Activated B cell treated with CpG ODN at 0.5 μM for 24 hours (primary cell): ENCODE measurements at regions of chr19 and their contacts with region 1.

Region 1: DNA sequence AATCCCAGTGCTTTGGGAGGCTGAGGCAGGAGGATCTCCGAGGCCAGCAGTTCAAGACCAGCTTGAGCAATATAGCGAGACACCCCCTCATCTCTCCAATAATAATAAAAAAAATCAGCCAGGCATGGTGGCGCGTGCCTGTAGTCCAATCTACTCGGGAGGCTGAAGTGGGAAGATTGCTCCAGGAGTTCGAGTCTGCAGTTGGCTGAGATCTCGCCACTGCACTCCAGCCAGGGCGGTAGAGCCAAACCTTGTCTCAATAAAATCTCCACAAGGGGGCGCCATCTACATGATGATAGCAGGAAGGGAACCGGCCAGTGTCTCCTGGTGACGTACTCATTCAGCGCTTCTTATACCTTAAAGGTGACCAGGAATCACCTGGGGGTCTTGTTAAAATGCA is 13.6 kb upstream of the C5AR1 start:
- DNase-seq: no peak
- ATAC-seq: peak; percentile 75
- H3K4me3 Mint-ChIP-seq: no peak overlapping the region
- H3K27ac Mint-ChIP-seq: no peak overlapping the region
- H3K4me1 Mint-ChIP-seq: peaks cover 20% of the 10 kb centered on the region
- H3K27me3 Mint-ChIP-seq: no peaks in the 10 kb centered on the region
- CTCF ChIP-seq: no peak

Region 2: DNA sequence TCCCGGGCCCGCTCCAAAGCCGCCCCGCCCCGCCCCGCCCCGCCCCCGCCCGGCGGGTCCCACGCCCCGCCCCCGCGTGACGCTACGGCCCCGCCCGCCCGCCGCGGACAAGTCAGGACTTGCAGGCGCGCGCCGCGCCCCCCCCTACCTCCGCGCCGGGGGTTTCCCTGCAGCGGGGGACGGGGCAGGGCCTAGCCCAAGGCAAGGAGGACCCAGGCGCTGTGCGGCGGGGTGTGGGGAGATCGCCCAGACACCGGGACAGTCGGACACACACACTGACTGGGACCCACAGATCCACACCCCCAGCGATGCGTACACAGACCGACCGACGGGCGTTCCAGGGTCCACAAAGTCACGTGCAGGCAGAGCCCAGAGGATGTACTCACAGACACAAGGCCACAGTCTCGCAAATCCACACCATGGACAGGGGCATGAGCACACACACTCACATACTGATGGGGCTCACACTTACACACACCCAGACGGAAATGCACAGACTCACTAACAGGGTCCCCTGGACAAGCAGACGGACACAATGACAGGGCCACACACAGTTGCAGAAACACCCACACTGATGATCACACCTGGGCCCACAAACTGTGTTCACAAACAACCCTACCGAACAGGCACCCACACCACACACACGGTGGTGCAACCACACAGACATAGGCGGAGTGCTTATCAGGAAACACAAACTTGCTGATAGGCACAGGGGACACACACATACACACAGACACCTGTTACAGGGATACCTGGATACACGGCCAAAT is 64.6 kb before region 1 on chr19:
- CTCF ChIA-PET with region 1: no interaction called
- POLR2A ChIA-PET with region 1: no interaction called
- intact Hi-C with region 1: no loop called
- DNase-seq: peak; percentile 86
- ATAC-seq: peak; percentile 63
- H3K4me3 Mint-ChIP-seq: peak overlapping the region; percentile 67
- H3K27ac Mint-ChIP-seq: peak overlapping the region; percentile 71
- H3K4me1 Mint-ChIP-seq: peaks cover 30% of the 10 kb centered on the region
- H3K27me3 Mint-ChIP-seq: no peaks in the 10 kb centered on the region
- CTCF ChIP-seq: no peak

Region 3: GRCh38 chr19:47336853-47337279 is 40.8 kb after region 1 on chr19:
- CTCF ChIA-PET with region 1: no interaction called
- POLR2A ChIA-PET with region 1: no interaction called
- intact Hi-C with region 1: no loop called
- DNase-seq: no peak
- ATAC-seq: peak; percentile 54
- H3K4me3 Mint-ChIP-seq: no peak overlapping the region
- H3K27ac Mint-ChIP-seq: no peak overlapping the region
- H3K4me1 Mint-ChIP-seq: peaks cover 7% of the 10 kb centered on the region
- H3K27me3 Mint-ChIP-seq: peaks cover 5% of the 10 kb centered on the region
- CTCF ChIP-seq: no peak

Region 4: GRCh38 chr19:47357788-47358680 is 62.0 kb after region 1 on chr19:
- CTCF ChIA-PET with region 1: no interaction called
- POLR2A ChIA-PET with region 1: no interaction called
- intact Hi-C with region 1: no loop called
- DNase-seq: no peak
- ATAC-seq: no peak
- H3K4me3 Mint-ChIP-seq: no peak overlapping the region
- H3K27ac Mint-ChIP-seq: no peak overlapping the region
- H3K4me1 Mint-ChIP-seq: no peaks in the 10 kb centered on the region
- H3K27me3 Mint-ChIP-seq: no peaks in the 10 kb centered on the region
- CTCF ChIP-seq: no peak

Region 5: DNA sequence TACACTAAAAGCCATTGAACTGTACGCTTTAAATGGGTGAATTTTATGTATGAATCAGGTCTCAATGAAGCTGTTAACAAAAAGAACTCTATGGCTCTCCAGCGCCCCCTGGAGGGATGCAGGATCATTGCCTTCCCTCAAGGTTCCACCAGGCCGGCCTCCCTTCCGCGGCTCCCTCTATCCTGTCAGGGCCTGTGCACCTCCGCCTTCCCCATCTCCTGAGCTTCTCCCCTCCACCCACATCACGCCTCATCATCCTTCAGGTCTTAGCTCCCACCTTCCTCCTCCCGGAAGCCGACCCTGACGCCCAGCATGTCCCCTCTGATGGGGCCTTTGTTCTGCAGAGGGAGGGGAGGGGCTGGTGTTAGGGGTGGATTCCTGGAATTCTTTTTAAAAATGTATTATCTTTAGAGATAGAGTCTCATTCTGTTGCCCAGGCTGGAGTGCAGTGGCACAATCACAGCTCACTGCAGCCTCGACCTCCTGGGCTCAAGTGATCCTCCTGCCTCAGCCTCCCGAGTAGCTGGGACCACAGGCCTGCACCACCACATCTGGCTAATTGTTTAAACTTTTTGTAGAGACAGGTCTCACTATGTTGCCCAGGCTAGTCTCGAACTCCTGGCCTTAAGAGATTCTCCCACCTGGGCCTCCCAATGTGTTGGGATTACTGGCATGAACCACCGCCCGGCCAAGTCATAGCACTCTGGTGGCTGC is 95.6 kb after region 1 on chr19:
- CTCF ChIA-PET with region 1: interaction called, 16 read pairs
- POLR2A ChIA-PET with region 1: no interaction called
- intact Hi-C with region 1: loop called (anchors 1 kb)
- DNase-seq: peak; percentile 60
- ATAC-seq: peak; percentile 93
- H3K4me3 Mint-ChIP-seq: no peak overlapping the region
- H3K27ac Mint-ChIP-seq: no peak overlapping the region
- H3K4me1 Mint-ChIP-seq: peaks cover 8% of the 10 kb centered on the region
- H3K27me3 Mint-ChIP-seq: peaks cover 6% of the 10 kb centered on the region
- CTCF ChIP-seq: no peak

Region 6: GRCh38 chr19:47427241-47428176 is 131.5 kb after region 1 on chr19:
- CTCF ChIA-PET with region 1: no interaction called
- POLR2A ChIA-PET with region 1: no interaction called
- intact Hi-C with region 1: loop called (anchors 1 kb)
- DNase-seq: peak; percentile 54
- ATAC-seq: peak; percentile 84
- H3K4me3 Mint-ChIP-seq: no peak overlapping the region
- H3K27ac Mint-ChIP-seq: no peak overlapping the region
- H3K4me1 Mint-ChIP-seq: peaks cover 5% of the 10 kb centered on the region
- H3K27me3 Mint-ChIP-seq: peaks cover 50% of the 10 kb centered on the region
- CTCF ChIP-seq: no peak

Region 7: GRCh38 chr19:47483800-47484690 is 188.0 kb after region 1 on chr19 and contains the start of gene KPTN:
- CTCF ChIA-PET with region 1: no interaction called
- POLR2A ChIA-PET with region 1: no interaction called
- intact Hi-C with region 1: loop called (anchors 1 kb)
- DNase-seq: peak; percentile 85
- ATAC-seq: peak; percentile 87
- H3K4me3 Mint-ChIP-seq: peak within 1 kb of the TSS; percentile 98
- H3K27ac Mint-ChIP-seq: peak within 1 kb of the TSS; percentile 99
- H3K4me1 Mint-ChIP-seq: peaks cover 42% of the 10 kb centered on the region
- H3K27me3 Mint-ChIP-seq: no peaks in the 10 kb centered on the region
- CTCF ChIP-seq: no peak
- total RNA-seq, gene KPTN: 8.0 and 8.7 TPM in 2 replicates

Region 8: DNA sequence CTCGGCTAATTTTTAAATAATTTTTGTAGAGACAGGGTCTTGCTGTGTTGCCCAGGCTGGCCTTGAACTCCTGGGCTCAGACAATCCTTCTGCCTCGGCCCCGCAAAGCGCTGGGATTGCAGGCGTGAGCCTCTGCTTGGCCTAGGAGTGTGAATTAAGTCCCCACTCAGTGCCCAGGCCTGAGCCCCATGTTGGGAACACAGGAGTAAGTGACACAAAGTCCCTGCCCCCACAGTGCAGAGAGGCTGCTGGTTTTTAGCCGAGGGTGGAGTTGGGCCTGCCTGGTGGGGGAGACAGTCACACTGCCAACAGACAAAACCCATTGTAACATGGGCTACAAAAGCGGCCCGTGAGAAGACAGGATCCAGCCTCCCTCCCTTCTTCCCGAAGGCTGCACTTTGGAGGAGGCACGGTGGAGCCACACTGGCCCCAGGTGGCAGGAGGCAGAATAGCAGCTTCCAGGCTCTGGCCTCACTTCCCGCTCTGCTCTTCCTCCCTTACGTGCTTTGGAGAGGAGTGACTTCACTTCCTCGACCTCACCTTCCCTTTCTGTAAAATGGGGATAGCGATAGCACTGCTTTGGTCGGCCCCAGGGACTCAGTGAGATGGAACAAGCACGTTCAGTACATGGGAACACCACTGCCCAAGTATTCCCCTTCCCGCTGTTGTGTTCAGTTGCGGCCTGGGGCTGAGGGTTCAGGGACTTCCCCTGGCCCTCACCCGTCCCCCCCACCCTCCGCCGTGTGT is 402.0 kb after region 1 on chr19:
- CTCF ChIA-PET with region 1: no interaction called
- POLR2A ChIA-PET with region 1: no interaction called
- intact Hi-C with region 1: loop called (anchors 5 kb)
- DNase-seq: peak; percentile 37
- ATAC-seq: peak; percentile 71
- H3K4me3 Mint-ChIP-seq: no peak overlapping the region
- H3K27ac Mint-ChIP-seq: no peak overlapping the region
- H3K4me1 Mint-ChIP-seq: no peaks in the 10 kb centered on the region
- H3K27me3 Mint-ChIP-seq: no peaks in the 10 kb centered on the region
- CTCF ChIP-seq: no peak

Region 9: DNA sequence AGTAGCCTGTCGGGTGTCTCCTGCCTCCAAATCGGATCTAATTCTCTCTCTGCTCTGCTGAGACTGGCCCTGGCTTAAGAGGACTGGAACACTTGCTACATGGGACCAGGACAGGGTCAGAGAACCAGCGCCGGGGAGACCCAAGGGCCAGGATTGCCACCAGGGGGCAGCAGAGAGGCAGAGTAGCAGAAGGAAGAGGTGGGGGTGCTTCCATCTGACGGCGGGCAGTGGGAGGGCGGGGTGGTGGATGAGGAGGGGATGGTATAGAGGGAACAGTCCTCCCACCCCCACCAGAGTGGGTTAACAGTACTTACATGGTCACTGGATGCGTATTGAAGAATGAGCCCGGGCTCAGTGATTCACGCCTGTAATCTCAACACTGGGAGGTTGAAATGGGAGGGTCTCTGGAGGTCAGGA is 494.4 kb after region 1 on chr19:
- CTCF ChIA-PET with region 1: no interaction called
- POLR2A ChIA-PET with region 1: no interaction called
- intact Hi-C with region 1: loop called (anchors 5 kb)
- DNase-seq: peak; percentile 74
- ATAC-seq: peak; percentile 58
- H3K4me3 Mint-ChIP-seq: no peak overlapping the region
- H3K27ac Mint-ChIP-seq: no peak overlapping the region
- H3K4me1 Mint-ChIP-seq: no peaks in the 10 kb centered on the region
- H3K27me3 Mint-ChIP-seq: peaks cover 2% of the 10 kb centered on the region
- CTCF ChIP-seq: peak; percentile 17